ENCODE measurements at regions of chr15 and their contacts with region 1.

Region 1: DNA sequence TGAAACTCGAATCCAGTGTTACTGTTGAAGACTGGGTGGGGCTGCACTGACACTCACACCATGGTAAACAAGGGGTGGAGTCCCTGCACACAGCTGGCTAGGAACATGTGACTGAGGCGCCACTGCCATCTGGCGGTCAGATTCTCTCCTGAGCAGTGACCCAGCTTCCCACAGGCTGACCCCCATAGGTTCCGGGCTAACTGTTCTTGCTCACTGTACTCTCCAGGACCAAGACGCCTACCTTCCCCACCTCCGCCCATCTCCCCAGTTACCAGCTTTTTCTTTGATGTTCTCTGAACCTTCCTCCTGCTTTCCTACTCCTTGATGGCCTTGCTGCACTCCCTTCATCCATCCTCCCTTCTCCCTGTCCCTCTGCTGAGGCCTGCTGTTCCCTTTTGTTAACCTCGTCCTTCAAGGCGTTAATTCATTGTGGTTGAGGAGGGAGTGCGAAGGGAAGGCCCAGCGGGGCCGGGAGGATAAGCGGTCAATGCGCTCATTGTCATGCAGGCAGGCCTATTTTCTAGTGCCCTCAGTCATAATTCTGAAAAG is 115.2 kb downstream of the ATP8B4 start:
- DNase-seq: peak; percentile 37
- ATAC-seq: peak; percentile 100
- H3K4me3 ChIP-seq: no peak overlapping the region
- H3K27ac ChIP-seq: no peak overlapping the region
- H3K4me1 ChIP-seq: no peaks in the 10 kb centered on the region
- H3K27me3 ChIP-seq: no peaks in the 10 kb centered on the region; a peak in 2 of 4 replicates
- CTCF ChIP-seq: peak; percentile 71 to 80 (median 79)
- EP300 ChIP-seq: no peak
- POLR2A ChIP-seq: no peak
- RAD21 ChIP-seq: peak; percentile 70

Region 2: DNA sequence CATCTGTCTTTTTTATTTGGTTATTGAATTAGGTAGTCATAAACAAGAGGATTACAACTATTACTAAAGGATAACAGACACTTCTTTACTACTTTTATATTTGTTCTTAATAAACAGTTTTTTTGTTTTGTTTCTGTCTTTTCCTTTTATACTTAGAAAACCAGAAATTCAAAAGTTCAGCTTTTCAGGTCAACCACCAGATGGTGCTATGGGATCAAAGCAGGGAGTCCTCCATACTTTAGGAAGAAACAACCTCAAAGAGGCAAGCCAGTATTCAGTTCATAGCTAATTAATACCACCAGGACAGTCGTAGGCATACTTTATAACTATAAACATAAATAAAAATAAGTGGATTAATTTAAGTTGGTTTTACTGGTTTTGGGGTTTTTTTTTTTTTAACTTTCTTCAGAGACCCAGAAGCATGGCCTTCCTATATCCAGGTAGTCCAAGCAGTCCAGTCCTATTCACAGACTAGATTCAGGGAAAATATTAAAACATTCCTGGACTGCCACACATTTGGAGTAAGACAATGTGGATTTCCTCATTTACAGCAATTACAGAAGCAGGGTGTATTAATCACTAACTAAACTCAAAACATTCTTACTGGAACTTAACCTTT is 1141.9 kb before region 1 on chr15:
- CTCF ChIA-PET with region 1: interaction called, 9 read pairs
- POLR2A ChIA-PET with region 1: no interaction called
- RAD21 ChIA-PET with region 1: interaction called, 12 read pairs
- SMC1A ChIA-PET with region 1: interaction called, 10 read pairs
- in situ Hi-C with region 1: loop called (anchors 10 kb)
- intact Hi-C with region 1: loop called (anchors 10 kb)
- DNase-seq: no peak
- ATAC-seq: peak; percentile 87
- H3K4me3 ChIP-seq: no peak overlapping the region
- H3K27ac ChIP-seq: no peak overlapping the region
- H3K4me1 ChIP-seq: no peaks in the 10 kb centered on the region
- H3K27me3 ChIP-seq: no peaks in the 10 kb centered on the region; a peak in 1 of 4 replicates
- CTCF ChIP-seq: peak; percentile 67 to 92 (median 68); a peak in 5 of 6 replicates
- EP300 ChIP-seq: no peak
- POLR2A ChIP-seq: no peak
- RAD21 ChIP-seq: peak; percentile 99

Region 3: GRCh38 chr15:49471733-49472132 is 532.1 kb before region 1 on chr15:
- CTCF ChIA-PET with region 1: interaction called, 8 read pairs
- POLR2A ChIA-PET with region 1: no interaction called
- RAD21 ChIA-PET with region 1: interaction called, 10 read pairs
- SMC1A ChIA-PET with region 1: interaction called, 9 read pairs
- in situ Hi-C with region 1: no loop called
- intact Hi-C with region 1: loop called (anchors 1 kb)
- DNase-seq: peak; percentile 40
- ATAC-seq: peak; percentile 73
- H3K4me3 ChIP-seq: no peak overlapping the region
- H3K27ac ChIP-seq: peak overlapping the region; percentile 31
- H3K4me1 ChIP-seq: peaks cover 7% of the 10 kb centered on the region
- H3K27me3 ChIP-seq: no peaks in the 10 kb centered on the region
- CTCF ChIP-seq: no peak
- EP300 ChIP-seq: peak; percentile 42 to 81; a peak in 3 of 4 replicates
- POLR2A ChIP-seq: no peak
- RAD21 ChIP-seq: no peak

Region 4: GRCh38 chr15:49558924-49559323 is 444.9 kb before region 1 on chr15:
- CTCF ChIA-PET with region 1: no interaction called
- POLR2A ChIA-PET with region 1: no interaction called
- RAD21 ChIA-PET with region 1: no interaction called
- SMC1A ChIA-PET with region 1: no interaction called
- in situ Hi-C with region 1: no loop called
- intact Hi-C with region 1: no loop called
- DNase-seq: no peak
- ATAC-seq: no peak
- H3K4me3 ChIP-seq: no peak overlapping the region
- H3K27ac ChIP-seq: no peak overlapping the region
- H3K4me1 ChIP-seq: no peaks in the 10 kb centered on the region
- H3K27me3 ChIP-seq: no peaks in the 10 kb centered on the region
- CTCF ChIP-seq: no peak
- EP300 ChIP-seq: no peak
- POLR2A ChIP-seq: no peak
- RAD21 ChIP-seq: no peak

Region 5: DNA sequence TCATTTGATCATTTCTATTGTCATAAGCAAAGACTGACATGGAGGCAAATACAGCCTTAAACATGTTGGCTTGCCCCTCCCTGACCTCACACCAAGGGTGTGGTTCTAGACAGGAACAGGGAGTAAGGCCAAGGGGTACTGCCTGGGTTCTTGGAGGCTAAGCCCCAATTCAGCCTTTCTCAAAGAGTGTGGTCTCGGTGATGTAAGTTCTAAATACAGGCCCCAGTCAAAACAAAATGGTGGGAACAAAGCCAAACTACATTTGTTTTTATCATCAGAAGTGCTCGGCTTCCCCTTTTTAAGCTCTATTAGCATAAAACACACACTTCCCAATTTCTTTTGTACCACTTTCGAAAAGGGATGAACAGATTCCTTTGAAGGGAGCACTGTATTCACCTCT is 14.4 kb before region 1 on chr15:
- CTCF ChIA-PET with region 1: interaction called, 26 read pairs
- POLR2A ChIA-PET with region 1: interaction called, 3 read pairs
- RAD21 ChIA-PET with region 1: interaction called, 5 read pairs
- SMC1A ChIA-PET with region 1: interaction called, 24 read pairs
- in situ Hi-C with region 1: no loop called
- intact Hi-C with region 1: no loop called
- DNase-seq: no peak
- ATAC-seq: no peak
- H3K4me3 ChIP-seq: no peak overlapping the region
- H3K27ac ChIP-seq: no peak overlapping the region
- H3K4me1 ChIP-seq: no peaks in the 10 kb centered on the region
- H3K27me3 ChIP-seq: no peaks in the 10 kb centered on the region; a peak in 2 of 4 replicates
- CTCF ChIP-seq: no peak
- EP300 ChIP-seq: no peak
- POLR2A ChIP-seq: no peak
- RAD21 ChIP-seq: no peak

Region 6: GRCh38 chr15:50051803-50052419 is 48.1 kb after region 1 on chr15:
- CTCF ChIA-PET with region 1: interaction called, 114 read pairs
- POLR2A ChIA-PET with region 1: interaction called, 7 read pairs
- RAD21 ChIA-PET with region 1: interaction called, 50 read pairs
- SMC1A ChIA-PET with region 1: interaction called, 53 read pairs
- in situ Hi-C with region 1: no loop called
- intact Hi-C with region 1: no loop called
- DNase-seq: no peak
- ATAC-seq: peak; percentile 44
- H3K4me3 ChIP-seq: no peak overlapping the region
- H3K27ac ChIP-seq: no peak overlapping the region
- H3K4me1 ChIP-seq: no peaks in the 10 kb centered on the region
- H3K27me3 ChIP-seq: no peaks in the 10 kb centered on the region
- CTCF ChIP-seq: peak; percentile 44 to 51 (median 50)
- EP300 ChIP-seq: no peak
- POLR2A ChIP-seq: no peak
- RAD21 ChIP-seq: peak; percentile 56

Region 7: GRCh38 chr15:51681303-51681963 is 1677.6 kb after region 1 on chr15 and contains the start of gene SCG3:
- CTCF ChIA-PET with region 1: no interaction called
- POLR2A ChIA-PET with region 1: no interaction called
- RAD21 ChIA-PET with region 1: no interaction called
- SMC1A ChIA-PET with region 1: no interaction called
- in situ Hi-C with region 1: no loop called
- intact Hi-C with region 1: no loop called
- DNase-seq: no peak
- ATAC-seq: peak; percentile 51
- H3K4me3 ChIP-seq: no peak within 1 kb of the TSS
- H3K27ac ChIP-seq: no peak within 1 kb of the TSS
- H3K4me1 ChIP-seq: no peaks in the 10 kb centered on the region
- H3K27me3 ChIP-seq: peaks cover 0 to 3% of the 10 kb centered on the region in 2 experiments; a peak in 1 of 4 replicates
- CTCF ChIP-seq: no peak
- EP300 ChIP-seq: no peak
- POLR2A ChIP-seq: no peak
- RAD21 ChIP-seq: no peak
- polyA plus RNA-seq, gene SCG3: not detected